Posterior vena cava (tissue), 2 donors: ENCODE measurements at regions of chr1 and their contacts with region 1.

Region 1: GRCh38 chr1:8727809-8728213 is 89.6 kb downstream of the RERE start:
- DNase-seq: no peak

Region 2: DNA sequence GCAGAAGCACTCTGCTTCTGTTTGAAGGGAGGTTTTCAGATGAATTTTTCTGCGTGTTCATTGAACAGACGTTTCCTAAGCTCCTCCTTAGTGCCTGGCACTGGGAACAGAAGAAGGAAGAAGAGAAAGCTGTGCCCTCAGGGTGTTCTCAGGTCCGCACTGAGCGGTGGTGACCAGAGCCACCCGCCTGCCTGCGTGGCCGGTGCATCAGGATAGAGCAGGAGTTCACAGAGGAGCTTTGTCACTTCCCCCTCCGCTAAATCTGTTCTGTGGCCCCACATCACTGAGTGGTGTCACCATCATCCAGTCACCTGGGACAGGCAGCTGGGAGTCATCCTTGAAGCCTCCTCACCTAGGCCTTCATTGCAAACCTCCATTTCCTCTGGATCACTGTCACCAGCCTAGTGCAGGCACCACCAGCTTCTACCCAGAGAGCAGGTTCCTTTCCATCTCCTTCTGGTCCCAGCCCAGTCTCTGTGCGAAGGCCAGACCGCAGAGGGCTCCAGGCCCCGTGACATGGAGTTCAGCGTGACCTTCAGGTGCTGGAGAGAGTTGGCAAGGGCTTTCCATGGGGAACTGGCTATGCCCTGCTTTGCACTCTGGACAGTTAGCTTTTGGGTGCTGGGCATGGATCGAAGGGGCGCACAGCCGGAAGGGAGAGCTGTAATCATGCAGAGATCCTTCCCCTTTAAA is 744.6 kb before region 1 on chr1:
- intact Hi-C with region 1: loop called in 1 of 2 experiments (anchors 5 kb)
- DNase-seq: peak; percentile 46

Region 3: DNA sequence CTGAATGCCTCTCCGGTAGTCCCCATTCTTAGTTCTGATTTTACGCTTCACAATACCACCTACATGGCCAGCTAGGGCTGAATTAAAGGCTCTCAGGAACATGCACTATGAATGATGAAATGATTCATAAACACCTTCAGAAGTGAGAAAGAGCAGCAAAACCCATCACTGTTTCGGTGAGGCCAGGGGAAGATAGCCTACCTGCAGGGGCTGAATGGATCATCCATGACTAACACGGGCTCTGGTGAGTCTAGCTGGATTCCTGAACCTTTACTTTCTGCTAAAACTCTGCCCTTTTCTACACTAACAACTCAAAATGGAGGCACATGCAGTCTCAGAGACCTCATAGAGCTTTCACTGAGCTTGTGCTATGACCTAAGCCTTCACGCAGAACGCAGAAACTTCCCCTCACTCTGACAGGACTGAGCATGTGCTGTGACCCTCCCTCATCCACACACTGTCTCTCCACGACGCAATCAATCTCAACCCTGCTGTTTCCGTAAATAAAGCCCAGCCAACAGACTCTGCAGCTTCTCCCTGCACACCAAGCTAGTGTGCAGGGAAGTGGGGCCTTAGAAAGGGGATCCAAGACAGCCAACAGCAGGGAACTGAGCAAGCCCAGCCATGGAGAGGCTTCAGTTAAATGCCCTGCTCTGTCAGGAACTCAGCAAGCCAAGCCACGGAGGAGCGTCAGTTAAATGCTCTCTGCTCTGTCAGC is 202.1 kb before region 1 on chr1:
- intact Hi-C with region 1: no loop called
- DNase-seq: peak; percentile 89

Region 4: DNA sequence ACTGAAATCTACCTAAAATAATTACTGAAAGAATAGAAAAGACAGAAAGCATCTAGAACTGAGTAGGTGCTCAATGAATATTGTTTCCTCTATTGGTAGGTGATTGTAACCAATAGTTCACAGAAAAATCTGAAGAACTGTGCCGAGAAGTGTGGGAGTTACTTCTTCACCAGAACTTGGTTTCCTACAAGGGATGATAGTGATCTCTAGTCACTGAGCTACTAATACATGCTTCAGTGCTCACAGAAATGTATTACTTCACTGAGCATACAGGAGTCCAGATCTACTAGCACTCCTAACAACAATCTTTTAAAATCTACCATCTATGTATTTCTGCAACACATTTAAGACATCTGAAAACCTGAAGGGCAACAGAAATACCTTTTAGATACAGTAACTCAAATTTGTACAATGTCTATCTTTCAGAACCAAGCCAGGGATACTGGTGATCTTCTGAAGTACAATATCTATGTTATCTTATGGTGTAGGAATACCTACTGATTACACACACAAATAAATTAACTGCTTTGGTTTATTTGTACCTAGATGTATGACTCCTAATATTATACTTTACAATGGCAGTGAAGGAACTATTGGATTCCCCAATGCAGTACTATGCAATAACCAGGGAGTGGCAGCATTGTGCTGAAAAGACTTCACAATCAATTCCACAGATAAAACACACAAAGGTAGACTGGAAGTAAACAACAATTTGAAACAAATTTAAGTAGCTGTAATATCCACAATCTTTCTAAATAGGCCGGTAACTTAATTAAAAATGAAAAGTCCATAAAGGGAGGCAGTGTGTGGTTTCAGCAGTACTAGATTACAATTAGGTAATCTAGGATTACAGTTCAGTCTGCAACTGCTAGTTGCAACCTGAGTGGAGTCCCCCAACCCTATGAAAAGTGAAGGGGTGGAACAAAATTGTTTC is 166.9 kb before region 1 on chr1:
- intact Hi-C with region 1: loop called in 1 of 2 experiments (anchors 10 kb)
- DNase-seq: no peak